Sciatic nerve (tissue), 2 donors: ENCODE measurements at regions of chr14 and their contacts with region 1.

Region 1: DNA sequence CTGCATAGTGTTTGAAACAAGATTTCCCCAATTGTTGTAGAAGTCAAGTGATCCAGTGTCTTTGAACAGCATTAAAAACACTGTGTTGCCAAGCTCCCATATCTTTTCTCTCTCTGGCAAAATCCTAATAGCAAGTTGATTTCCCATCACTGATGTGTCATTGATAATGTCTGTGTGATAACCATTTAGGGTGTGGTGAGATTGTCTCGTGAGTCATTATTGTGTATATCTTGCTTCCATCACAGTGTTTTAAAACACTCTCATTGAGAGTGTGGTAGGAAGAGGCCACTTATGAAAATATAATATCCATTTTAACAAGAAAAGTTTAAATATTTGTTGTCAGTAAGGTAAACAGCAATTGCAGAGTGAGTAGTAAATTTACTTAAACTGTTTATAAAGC is 74.7 kb downstream of the PRORP start:
- DNase-seq: no peak
- ATAC-seq: no peak

Region 2: DNA sequence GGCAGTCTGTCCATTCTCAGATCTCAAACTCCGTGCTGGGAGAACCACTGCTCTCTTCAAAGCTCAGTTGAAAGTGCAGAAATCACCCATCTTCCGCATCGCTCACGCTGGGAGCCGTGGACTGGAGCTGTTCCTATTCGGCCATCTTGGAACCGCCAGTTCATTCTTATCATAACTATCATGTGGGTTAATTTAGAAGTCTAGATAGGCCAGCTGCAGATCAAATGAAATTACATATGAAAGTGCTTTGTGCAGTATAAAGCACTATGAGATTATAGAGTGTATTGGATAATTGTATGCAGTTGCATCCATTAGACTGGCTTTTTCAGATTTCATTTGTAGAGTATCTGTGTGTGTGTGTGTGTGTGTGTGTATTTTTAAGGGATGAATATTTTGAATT is 16.8 kb before region 1 on chr14:
- intact Hi-C with region 1: loop called (anchors 1 kb)
- DNase-seq: no peak
- ATAC-seq: no peak

Region 3: GRCh38 chr14:36070031-36070719 is 873.2 kb after region 1 on chr14:
- intact Hi-C with region 1: no loop called
- DNase-seq: peak; percentile 68
- ATAC-seq: peak; percentile 59